Activated CD4-positive, alpha-beta T cell treated with anti-CD3 and anti-CD28 coated beads, Interleukin-2, amount 10 ng/mL, durations not matched to agents 24 days and 14 days (primary cell): ENCODE measurements at regions of chr5 and their contacts with region 1.

Region 1: DNA sequence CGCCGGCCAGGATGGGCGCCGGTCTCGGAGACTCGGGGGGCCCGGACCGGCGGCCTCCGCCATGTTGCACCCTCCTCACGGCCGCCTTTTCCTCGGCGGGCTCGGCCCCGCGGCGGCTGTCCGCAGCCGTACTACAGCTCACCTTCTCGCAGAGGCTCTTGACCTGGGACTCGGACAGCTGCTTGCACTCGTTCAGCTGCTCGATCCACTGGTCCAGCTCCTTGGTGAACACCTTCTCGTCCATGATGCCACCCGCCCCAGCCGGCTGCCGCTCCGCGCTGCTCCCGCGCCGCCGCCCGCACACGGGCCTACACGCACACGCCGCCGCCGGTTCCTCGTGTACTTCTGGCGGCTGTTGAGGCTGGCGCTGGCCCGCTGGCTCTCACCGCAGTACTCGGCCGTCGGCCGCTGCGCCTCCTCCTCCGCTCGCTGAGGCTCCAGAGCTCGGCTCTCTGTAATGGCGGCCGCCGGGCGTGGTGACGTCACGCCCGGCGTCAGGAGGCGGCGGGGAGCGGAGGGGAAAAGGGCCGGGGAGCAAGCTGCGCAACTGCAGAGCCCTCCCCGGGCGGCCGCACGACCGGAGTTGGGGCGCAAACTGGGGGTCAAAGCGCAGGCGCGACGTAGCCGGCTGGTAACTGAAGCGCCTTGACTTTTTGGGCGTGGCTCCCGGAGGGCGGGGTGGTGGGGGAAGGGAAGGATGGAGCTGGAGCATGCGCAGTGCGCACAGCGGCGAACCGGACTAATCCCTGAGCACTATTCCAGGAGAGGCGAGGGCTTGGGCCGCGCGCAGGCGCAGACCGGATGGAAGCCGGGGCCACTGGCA is at the start of gene PPP2CA:
- DNase-seq: peak; percentile 100
- H3K4me3 Mint-ChIP-seq: peak within 1 kb of the TSS; percentile 97
- H3K27ac Mint-ChIP-seq: peak within 1 kb of the TSS; percentile 100
- H3K4me1 Mint-ChIP-seq: peaks cover 42% of the 10 kb centered on the region
- H3K27me3 Mint-ChIP-seq: no peaks in the 10 kb centered on the region
- total RNA-seq, gene PPP2CA: 177 and 199 TPM in 2 replicates

Region 2: GRCh38 chr5:133801955-133802751 is 423.7 kb before region 1 on chr5:
- intact Hi-C with region 1: no loop called
- DNase-seq: no peak
- H3K4me3 Mint-ChIP-seq: no peak overlapping the region
- H3K27ac Mint-ChIP-seq: no peak overlapping the region
- H3K4me1 Mint-ChIP-seq: no peaks in the 10 kb centered on the region
- H3K27me3 Mint-ChIP-seq: peaks cover 19% of the 10 kb centered on the region

Region 3: GRCh38 chr5:134004592-134005375 is 221.0 kb before region 1 on chr5 and contains the start of gene VDAC1:
- intact Hi-C with region 1: loop called (anchors 1 kb)
- DNase-seq: peak; percentile 95
- H3K4me3 Mint-ChIP-seq: peak within 1 kb of the TSS; percentile 93
- H3K27ac Mint-ChIP-seq: peak within 1 kb of the TSS; percentile 96
- H3K4me1 Mint-ChIP-seq: peaks cover 40% of the 10 kb centered on the region
- H3K27me3 Mint-ChIP-seq: no peaks in the 10 kb centered on the region
- total RNA-seq, gene VDAC1: 508 and 515 TPM in 2 replicates

Region 4: GRCh38 chr5:134184155-134185135 is 41.4 kb before region 1 on chr5:
- intact Hi-C with region 1: loop called (anchors 2 kb)
- DNase-seq: peak; percentile 94
- H3K4me3 Mint-ChIP-seq: no peak overlapping the region
- H3K27ac Mint-ChIP-seq: no peak overlapping the region
- H3K4me1 Mint-ChIP-seq: no peaks in the 10 kb centered on the region
- H3K27me3 Mint-ChIP-seq: peaks cover 4% of the 10 kb centered on the region

Region 5: GRCh38 chr5:134304311-134304710 is 78.5 kb after region 1 on chr5:
- intact Hi-C with region 1: no loop called
- DNase-seq: no peak
- H3K4me3 Mint-ChIP-seq: no peak overlapping the region
- H3K27ac Mint-ChIP-seq: no peak overlapping the region
- H3K4me1 Mint-ChIP-seq: no peaks in the 10 kb centered on the region
- H3K27me3 Mint-ChIP-seq: peaks cover 6% of the 10 kb centered on the region

Region 6: DNA sequence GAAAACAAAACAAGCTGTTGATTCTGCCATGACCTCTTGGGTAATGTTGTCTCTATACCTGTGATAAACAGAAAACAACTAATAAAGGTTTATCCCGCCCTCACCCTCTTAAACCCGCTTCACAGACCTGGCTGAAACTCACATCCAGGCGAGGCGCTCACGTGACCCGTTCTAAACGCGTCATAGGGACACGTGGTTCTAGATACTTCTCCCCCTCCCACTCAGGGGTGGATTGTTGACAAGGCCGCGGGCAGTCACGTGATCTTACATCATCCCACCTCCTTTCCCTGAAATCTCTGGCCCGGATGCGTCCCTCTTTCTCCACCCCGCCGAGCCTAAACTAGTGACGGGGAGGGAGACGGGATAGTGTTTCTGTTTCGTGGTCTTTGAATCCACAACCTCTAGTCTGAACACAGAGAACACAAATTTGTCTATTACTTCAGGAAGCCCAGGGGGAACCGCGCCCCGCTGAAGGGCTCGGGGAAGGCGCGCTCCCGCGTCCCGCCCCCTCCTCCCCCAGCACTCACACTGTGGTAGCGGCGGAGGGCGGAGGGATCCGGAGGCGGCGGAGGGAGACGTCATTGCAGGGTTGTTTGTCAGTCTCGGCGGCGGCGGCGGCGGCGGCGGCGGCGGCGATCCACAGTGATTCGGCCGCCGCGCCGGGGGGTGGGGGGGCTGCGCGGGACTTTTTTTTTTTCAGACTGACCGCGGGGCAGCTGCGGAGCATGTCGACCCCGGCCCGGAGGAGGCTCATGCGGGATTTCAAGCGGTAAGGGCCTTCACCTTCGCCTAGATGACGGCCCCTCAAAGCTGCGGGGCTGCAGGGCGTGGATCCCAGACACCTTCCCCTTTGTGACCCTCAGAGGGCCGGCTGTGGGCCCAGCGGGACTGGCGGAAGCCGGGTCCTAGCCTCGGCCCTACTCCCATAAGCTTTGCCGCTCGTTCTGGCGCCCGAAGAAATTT is 145.3 kb after region 1 on chr5 and contains the start of gene UBE2B:
- intact Hi-C with region 1: loop called (anchors 1 kb)
- DNase-seq: peak; percentile 98
- H3K4me3 Mint-ChIP-seq: peak within 1 kb of the TSS; percentile 93
- H3K27ac Mint-ChIP-seq: peak within 1 kb of the TSS; percentile 93
- H3K4me1 Mint-ChIP-seq: peaks cover 42% of the 10 kb centered on the region
- H3K27me3 Mint-ChIP-seq: peaks cover 3% of the 10 kb centered on the region
- total RNA-seq, gene UBE2B: 108 and 109 TPM in 2 replicates

Region 7: GRCh38 chr5:134637161-134637582 is 411.3 kb after region 1 on chr5:
- intact Hi-C with region 1: loop called (anchors 1 kb)
- DNase-seq: no peak
- H3K4me3 Mint-ChIP-seq: no peak overlapping the region
- H3K27ac Mint-ChIP-seq: no peak overlapping the region
- H3K4me1 Mint-ChIP-seq: peaks cover 6% of the 10 kb centered on the region
- H3K27me3 Mint-ChIP-seq: no peaks in the 10 kb centered on the region

Region 8: GRCh38 chr5:134738133-134738962 is 512.5 kb after region 1 on chr5 and contains the start of gene CAMLG:
- intact Hi-C with region 1: loop called (anchors 2 kb)
- DNase-seq: peak; percentile 99
- H3K4me3 Mint-ChIP-seq: peak within 1 kb of the TSS; percentile 94
- H3K27ac Mint-ChIP-seq: peak within 1 kb of the TSS; percentile 91
- H3K4me1 Mint-ChIP-seq: peaks cover 13% of the 10 kb centered on the region
- H3K27me3 Mint-ChIP-seq: no peaks in the 10 kb centered on the region
- total RNA-seq, gene CAMLG: 28.2 and 28.3 TPM in 2 replicates